Activated B cell treated with CpG ODN at 0.5 μM for 24 hours (primary cell): ENCODE measurements at regions of chr11 and their contacts with region 1.

Region 1: GRCh38 chr11:1852877-1853276 is at the start of gene LSP1:
- DNase-seq: peak; percentile 83
- ATAC-seq: peak; percentile 64
- H3K4me3 Mint-ChIP-seq: peak within 1 kb of the TSS; percentile 99
- H3K27ac Mint-ChIP-seq: peak within 1 kb of the TSS; percentile 98
- H3K4me1 Mint-ChIP-seq: peaks cover 84% of the 10 kb centered on the region
- H3K27me3 Mint-ChIP-seq: no peaks in the 10 kb centered on the region
- CTCF ChIP-seq: no peak
- total RNA-seq, gene LSP1: 301 and 303 TPM in 2 replicates

Region 2: GRCh38 chr11:1382831-1383607 is 469.9 kb before region 1 on chr11:
- CTCF ChIA-PET with region 1: no interaction called
- POLR2A ChIA-PET with region 1: interaction called, 3 read pairs
- intact Hi-C with region 1: loop called (anchors 2 kb)
- DNase-seq: peak; percentile 68
- ATAC-seq: peak; percentile 74
- H3K4me3 Mint-ChIP-seq: peak overlapping the region; percentile 85
- H3K27ac Mint-ChIP-seq: peak overlapping the region; percentile 91
- H3K4me1 Mint-ChIP-seq: peaks cover 31% of the 10 kb centered on the region
- H3K27me3 Mint-ChIP-seq: peaks cover 1% of the 10 kb centered on the region
- CTCF ChIP-seq: no peak

Region 3: DNA sequence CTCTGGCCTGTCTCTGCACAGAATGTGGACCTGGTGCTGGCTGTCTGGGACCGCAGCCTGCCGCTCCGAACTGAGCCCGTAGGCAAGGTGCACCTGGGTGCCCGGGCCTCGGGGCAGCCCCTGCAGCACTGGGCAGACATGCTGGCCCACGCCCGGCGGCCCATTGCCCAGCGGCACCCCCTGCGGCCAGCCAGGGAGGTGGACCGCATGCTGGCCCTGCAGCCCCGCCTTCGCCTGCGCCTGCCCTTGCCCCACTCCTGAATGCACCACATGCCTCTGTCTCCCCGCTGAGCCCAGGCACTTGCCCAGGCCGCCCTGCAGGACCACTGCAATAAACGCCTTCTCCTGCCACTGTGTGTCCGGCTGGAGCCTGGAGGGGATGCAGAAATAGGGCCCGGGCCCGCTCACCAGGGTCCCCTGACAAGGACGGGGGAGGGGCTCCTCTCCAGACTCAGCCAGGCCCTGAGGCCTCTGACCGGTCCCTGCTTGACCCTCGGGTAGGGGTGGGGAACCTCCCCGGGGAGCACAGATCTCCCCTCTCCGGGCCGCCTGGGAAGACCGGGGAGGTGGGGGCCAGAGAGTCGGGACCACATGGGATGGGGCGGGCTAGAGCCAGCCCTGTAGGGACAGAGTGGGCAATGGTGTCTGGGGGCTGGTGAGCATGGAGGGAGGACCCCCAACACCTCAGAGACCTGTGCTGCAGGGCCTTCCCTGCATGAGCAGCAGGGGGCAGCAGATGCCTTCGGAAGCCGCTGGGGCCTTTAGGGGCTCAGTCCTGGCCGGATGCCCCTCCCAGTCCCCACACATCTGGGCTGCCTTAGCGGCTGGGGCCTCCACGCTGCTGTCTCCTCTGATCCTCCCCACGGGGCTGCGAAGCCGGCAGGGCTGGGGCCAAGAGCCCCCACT is 15.5 kb before region 1 on chr11:
- CTCF ChIA-PET with region 1: interaction called, 6 read pairs
- POLR2A ChIA-PET with region 1: interaction called, 25 read pairs
- intact Hi-C with region 1: loop called (anchors 1 kb)
- DNase-seq: peak; percentile 76
- ATAC-seq: peak; percentile 80
- H3K4me3 Mint-ChIP-seq: no peak overlapping the region
- H3K27ac Mint-ChIP-seq: no peak overlapping the region
- H3K4me1 Mint-ChIP-seq: peaks cover 29% of the 10 kb centered on the region
- H3K27me3 Mint-ChIP-seq: peaks cover 3% of the 10 kb centered on the region
- CTCF ChIP-seq: peak; percentile 83

Region 4: GRCh38 chr11:1882519-1883238 is 29.8 kb after region 1 on chr11:
- CTCF ChIA-PET with region 1: interaction called, 15 read pairs
- POLR2A ChIA-PET with region 1: interaction called, 55 read pairs
- intact Hi-C with region 1: loop called (anchors 1 kb)
- DNase-seq: peak; percentile 73
- ATAC-seq: peak; percentile 83
- H3K4me3 Mint-ChIP-seq: no peak overlapping the region
- H3K27ac Mint-ChIP-seq: no peak overlapping the region
- H3K4me1 Mint-ChIP-seq: peaks cover 35% of the 10 kb centered on the region
- H3K27me3 Mint-ChIP-seq: no peaks in the 10 kb centered on the region
- CTCF ChIP-seq: no peak

Region 5: GRCh38 chr11:1917671-1918516 is 65.0 kb after region 1 on chr11:
- CTCF ChIA-PET with region 1: interaction called, 5 read pairs
- POLR2A ChIA-PET with region 1: interaction called, 5 read pairs
- intact Hi-C with region 1: loop called (anchors 5 kb)
- DNase-seq: no peak
- ATAC-seq: peak; percentile 40
- H3K4me3 Mint-ChIP-seq: no peak overlapping the region
- H3K27ac Mint-ChIP-seq: no peak overlapping the region
- H3K4me1 Mint-ChIP-seq: peaks cover 7% of the 10 kb centered on the region
- H3K27me3 Mint-ChIP-seq: peaks cover 21% of the 10 kb centered on the region
- CTCF ChIP-seq: no peak

Region 6: DNA sequence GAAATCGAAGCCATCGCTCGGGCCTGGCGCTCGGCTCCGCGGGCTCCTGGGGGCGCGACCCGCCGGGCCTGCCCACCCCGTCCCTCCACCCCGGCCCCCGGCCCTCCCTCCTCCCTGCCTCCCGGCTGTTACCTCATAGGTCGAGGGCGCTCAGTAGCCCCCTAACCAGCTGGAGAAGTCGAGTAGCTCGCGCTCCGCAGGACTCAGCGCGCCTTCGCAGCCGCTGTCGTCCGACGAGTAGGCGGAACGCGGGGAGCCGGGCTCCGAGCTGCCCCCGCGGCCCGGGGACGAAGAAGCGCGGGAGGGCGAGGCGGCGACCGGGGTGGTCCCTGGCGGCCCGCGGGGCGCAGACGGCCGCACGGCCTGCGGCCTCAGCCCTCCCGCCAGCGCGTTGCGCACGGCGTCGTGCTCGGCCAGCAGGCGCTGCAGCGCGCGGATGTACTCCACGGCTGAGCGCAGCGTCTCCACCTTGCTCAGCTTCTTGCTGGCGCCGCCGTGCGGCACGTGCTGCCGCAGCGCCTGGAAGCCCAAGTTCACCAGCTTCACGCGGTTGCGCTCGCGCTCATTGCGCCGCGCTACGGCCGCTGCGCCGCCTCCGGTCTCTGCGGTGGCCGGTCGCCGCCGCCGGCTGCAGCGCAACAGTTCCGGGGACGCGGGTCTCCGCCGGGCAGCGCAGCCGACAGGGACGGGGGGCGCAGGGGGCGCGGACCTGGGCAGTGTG is 416.9 kb after region 1 on chr11:
- CTCF ChIA-PET with region 1: no interaction called
- POLR2A ChIA-PET with region 1: no interaction called
- intact Hi-C with region 1: loop called (anchors 5 kb)
- DNase-seq: peak; percentile 55
- ATAC-seq: peak; percentile 23
- H3K4me3 Mint-ChIP-seq: peak overlapping the region; percentile 70
- H3K27ac Mint-ChIP-seq: peak overlapping the region; percentile 74
- H3K4me1 Mint-ChIP-seq: peaks cover 41% of the 10 kb centered on the region
- H3K27me3 Mint-ChIP-seq: peaks cover 6% of the 10 kb centered on the region
- CTCF ChIP-seq: no peak